PC-3 (cell line): ENCODE measurements at regions of chr2 and their contacts with region 1.

Region 1: DNA sequence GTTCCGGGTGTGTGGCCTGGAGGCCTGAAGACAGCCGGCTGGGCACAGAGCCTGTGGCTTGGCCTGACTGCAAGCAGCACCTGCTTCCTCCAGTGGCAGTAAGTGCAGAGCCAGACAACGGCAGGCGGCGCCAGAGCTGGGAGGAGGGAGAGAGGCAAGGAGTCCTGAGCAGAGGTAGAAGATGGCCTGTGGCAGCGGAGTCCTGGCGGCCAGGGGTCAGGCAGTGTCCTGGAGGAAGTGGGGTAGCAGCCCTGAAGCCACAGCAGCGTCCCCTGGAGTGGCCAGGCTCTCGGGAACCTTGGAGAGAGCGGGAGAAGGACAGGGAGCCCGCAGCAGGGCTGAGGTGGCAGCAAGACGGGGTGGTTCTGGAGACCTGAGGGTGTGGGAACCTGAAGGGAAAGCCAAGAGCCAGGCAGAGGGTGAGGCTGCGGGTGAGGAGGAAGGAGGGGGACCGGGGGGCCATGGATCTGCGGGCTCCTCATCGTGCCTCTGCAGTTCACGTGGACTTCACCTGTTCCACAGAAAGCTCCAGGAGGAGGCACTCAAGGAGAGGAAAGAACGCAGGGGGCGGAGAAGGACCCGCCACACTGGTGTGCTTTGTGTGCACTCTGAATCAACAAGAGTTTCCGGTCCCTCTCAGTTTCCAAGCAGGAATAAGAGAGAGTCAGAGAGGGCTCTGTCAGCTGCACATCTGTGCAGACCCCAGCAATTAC is 85.9 kb downstream of the USP40 start:
- DNase-seq: peak; percentile 76
- ATAC-seq: peak; percentile 70
- H3K4me3 ChIP-seq: peak overlapping the region; percentile 23; the same call in 1 of the 2 replicates
- H3K27ac ChIP-seq: peak overlapping the region; percentile 77
- H3K4me1 ChIP-seq: peaks cover 45% of the 10 kb centered on the region
- H3K27me3 ChIP-seq: no peaks in the 10 kb centered on the region
- CTCF ChIP-seq: peak; percentile 57

Region 2: DNA sequence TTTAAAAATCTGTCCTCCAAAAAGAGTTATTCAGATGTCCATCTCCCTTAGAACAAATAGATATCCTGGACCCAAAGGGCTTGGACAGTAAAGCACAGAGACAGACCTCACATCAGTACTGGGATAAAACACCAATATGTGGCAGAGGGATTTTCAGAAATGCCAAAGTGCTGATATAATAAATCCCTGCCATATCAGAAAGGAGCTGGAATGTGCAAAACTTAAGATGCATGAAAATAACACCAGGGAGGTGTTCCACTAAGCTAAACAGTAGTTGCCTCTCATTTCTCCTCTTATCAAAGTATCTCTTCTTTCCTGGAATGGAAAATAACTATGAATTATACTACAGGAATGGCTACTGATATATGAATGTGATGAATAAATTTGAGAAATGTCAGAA is 72.7 kb after region 1 on chr2:
- CTCF ChIA-PET with region 1: no interaction called
- POLR2A ChIA-PET with region 1: interaction called, 18 read pairs
- intact Hi-C with region 1: no loop called
- DNase-seq: no peak
- ATAC-seq: no peak
- H3K4me3 ChIP-seq: no peak overlapping the region
- H3K27ac ChIP-seq: no peak overlapping the region
- H3K4me1 ChIP-seq: peaks cover 31% of the 10 kb centered on the region
- H3K27me3 ChIP-seq: no peaks in the 10 kb centered on the region
- CTCF ChIP-seq: no peak

Region 3: DNA sequence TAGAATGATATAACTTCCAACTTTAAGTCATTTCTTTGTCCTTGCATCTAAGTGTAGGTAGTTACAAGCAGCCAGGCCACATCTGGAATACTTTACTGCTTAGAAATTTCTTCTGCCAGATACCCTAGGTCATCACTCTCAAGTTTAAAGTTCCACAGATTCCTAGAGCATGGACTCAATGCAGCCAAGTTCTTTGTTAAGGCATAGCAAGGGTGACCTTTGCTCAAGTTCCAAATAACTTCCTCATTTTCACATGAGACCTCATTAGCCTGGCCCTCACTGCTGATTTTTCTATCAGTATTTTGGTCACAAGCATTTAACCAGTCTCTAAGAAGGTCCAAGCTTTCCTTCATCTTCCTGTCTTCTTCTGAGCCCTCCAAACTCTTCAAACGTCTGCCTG is 183.3 kb after region 1 on chr2:
- CTCF ChIA-PET with region 1: no interaction called
- POLR2A ChIA-PET with region 1: no interaction called
- intact Hi-C with region 1: no loop called
- DNase-seq: no peak
- ATAC-seq: no peak
- H3K4me3 ChIP-seq: no peak overlapping the region
- H3K27ac ChIP-seq: no peak overlapping the region
- H3K4me1 ChIP-seq: no peaks in the 10 kb centered on the region
- H3K27me3 ChIP-seq: no peaks in the 10 kb centered on the region
- CTCF ChIP-seq: no peak

Region 4: DNA sequence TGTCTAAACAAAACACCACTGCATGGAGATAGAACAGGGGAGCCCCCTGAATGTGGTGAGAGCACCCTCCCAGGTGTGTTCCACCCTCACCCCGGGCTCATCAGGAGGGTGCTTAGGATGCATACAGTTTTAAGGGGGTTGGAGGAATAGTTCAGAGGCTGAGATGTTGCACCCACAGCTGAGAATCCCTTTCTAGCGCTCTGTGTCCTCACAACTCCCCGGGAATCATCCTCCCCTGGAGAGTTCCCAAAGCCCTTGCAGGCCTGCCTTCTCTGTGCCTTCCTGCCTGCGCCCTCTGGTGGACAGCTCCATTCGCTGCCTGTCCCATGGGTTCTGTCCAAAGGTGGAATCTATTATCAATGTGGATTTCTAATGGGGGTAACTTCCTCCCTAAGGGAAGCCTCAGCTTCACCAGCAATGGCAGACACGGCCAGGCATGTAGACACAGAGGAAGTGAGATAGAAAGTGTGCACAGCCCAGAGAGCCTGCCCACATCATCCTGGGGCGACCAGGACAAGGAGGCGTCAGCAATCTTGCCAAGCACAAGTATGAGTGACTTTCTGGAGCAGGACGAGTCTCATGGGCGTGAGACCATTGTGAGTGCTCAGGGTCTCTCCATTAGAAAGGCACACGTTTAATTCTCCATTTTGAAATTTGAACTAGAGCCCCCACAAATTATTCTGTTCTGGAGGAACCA is 230.8 kb after region 1 on chr2:
- CTCF ChIA-PET with region 1: no interaction called
- POLR2A ChIA-PET with region 1: no interaction called
- intact Hi-C with region 1: loop called (anchors 1 kb)
- DNase-seq: peak; percentile 86
- ATAC-seq: peak; percentile 69
- H3K4me3 ChIP-seq: no peak overlapping the region
- H3K27ac ChIP-seq: no peak overlapping the region
- H3K4me1 ChIP-seq: peaks cover 38% of the 10 kb centered on the region
- H3K27me3 ChIP-seq: no peaks in the 10 kb centered on the region
- CTCF ChIP-seq: peak; percentile 92

Region 5: DNA sequence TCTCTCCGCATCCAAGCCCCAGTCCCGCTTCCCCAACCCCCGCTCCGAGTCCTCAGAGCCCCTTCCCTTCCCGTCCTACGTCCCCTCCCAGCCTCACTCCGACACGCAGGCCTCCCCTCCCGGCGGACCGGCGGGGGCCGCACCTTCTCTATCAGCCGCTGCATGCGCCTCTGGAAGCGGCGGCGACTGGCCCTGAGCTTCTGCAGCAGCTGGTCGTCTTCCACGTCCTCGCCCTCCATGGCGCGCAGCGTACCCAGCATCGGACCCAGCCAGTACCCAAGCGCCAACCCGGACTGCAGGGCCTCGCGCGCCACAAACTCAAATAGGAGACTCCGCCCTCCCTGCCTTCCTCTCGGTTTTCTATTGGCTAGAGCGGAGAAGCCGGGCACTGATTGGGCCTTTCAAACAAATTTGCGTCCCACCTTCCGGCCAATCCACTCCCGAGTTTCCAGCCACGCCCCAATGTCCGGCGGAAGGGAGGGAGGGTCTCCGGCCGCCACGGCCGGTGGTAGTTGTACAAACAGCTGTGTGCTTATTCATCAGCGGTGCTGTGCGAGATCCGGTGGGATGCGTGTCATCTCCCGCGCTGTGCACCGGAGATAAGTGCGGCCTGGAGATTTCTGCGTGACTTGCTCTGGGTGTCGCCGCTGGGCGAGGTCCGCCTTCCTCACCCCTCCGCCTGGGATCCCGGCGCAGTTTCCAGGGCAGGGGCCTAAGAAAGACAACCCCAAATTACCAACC is 373.8 kb after region 1 on chr2 and contains the start of gene HJURP:
- CTCF ChIA-PET with region 1: no interaction called
- POLR2A ChIA-PET with region 1: no interaction called
- intact Hi-C with region 1: loop called (anchors 5 kb)
- DNase-seq: peak; percentile 97
- ATAC-seq: peak; percentile 88
- H3K4me3 ChIP-seq: peak within 1 kb of the TSS; percentile 98
- H3K27ac ChIP-seq: peak within 1 kb of the TSS; percentile 66
- H3K4me1 ChIP-seq: peaks cover 26% of the 10 kb centered on the region
- H3K27me3 ChIP-seq: no peaks in the 10 kb centered on the region
- CTCF ChIP-seq: no peak
- total RNA-seq, gene HJURP: 31.7 and 37.0 TPM in 2 replicates